Colonic mucosa (tissue), 4 donors: ENCODE measurements at regions of chr11 and their contacts with region 1.

Region 1: DNA sequence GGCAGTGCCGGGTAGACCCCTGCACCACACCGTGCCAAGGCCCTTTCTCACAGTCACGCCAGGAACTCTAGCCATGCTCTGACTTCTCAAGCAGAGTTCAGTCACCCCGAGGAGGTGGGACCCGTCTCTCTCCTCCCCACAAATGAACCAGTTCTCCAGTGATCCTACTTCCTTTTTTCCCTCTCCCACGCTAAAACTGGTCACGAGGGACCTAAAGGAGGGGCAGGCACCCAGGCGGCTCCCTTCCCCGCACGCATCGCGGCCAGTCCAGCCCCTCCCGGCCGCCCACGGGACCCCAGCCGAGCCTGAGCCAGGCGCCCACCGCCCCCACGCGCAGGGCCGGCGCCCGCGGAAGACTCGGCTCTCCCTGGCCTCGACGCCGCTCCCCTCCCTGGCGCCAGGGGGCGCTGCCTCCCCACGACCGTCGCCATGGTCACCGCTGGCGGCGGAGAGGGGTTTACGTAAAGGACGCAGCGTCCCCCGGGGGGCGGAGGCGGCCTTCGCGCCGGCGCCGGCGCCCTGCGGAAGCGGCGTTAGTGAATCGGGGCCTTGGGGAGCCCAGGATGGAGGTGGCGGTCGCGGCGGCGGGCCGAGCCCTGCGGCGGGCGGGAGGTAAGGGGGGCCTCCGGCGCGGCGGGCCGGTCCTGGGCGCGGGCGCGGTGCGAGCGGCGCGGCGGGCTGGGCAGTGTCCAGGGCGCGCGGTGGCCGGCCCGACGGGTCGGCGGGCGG is at the start of gene DAGLA:
- DNase-seq: peak; percentile 75
- H3K4me3 ChIP-seq: peak within 1 kb of the TSS; percentile 45
- H3K27ac ChIP-seq: no peak within 1 kb of the TSS
- H3K4me1 ChIP-seq: no peaks in the 10 kb centered on the region
- H3K27me3 ChIP-seq: no peaks in the 10 kb centered on the region
- CTCF ChIP-seq: peak; percentile 88
- total RNA-seq, gene DAGLA: 7.5 to 12.2 TPM

Region 2: DNA sequence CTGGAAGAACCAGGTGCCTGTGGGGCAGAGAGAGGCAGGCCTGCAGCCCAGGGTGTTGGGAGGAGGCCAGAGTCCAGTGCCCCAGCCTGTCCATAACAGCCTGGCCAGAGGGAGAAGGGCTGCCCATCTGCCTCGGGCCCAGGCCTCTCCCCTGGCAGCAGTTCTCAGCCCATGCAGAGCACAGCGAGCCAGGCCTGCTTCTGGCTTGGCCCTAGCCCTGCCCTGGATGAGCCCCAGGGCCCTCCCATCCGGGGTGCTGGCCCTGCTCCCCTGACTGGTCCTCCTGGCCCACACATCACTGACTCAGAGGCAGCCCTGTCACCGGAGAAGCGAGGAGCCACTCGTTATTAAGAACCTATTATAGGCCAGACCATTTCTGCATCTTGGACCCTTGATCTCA is 52.6 kb after region 1 on chr11:
- intact Hi-C with region 1: loop called (anchors 1 kb)
- DNase-seq: no peak
- H3K4me3 ChIP-seq: no peak overlapping the region
- H3K27ac ChIP-seq: no peak overlapping the region
- H3K4me1 ChIP-seq: no peaks in the 10 kb centered on the region
- H3K27me3 ChIP-seq: no peaks in the 10 kb centered on the region
- CTCF ChIP-seq: no peak